Dorsolateral prefrontal cortex (tissue), 120 donors: ENCODE measurements at regions of chr9 and their contacts with region 1.

Region 1: DNA sequence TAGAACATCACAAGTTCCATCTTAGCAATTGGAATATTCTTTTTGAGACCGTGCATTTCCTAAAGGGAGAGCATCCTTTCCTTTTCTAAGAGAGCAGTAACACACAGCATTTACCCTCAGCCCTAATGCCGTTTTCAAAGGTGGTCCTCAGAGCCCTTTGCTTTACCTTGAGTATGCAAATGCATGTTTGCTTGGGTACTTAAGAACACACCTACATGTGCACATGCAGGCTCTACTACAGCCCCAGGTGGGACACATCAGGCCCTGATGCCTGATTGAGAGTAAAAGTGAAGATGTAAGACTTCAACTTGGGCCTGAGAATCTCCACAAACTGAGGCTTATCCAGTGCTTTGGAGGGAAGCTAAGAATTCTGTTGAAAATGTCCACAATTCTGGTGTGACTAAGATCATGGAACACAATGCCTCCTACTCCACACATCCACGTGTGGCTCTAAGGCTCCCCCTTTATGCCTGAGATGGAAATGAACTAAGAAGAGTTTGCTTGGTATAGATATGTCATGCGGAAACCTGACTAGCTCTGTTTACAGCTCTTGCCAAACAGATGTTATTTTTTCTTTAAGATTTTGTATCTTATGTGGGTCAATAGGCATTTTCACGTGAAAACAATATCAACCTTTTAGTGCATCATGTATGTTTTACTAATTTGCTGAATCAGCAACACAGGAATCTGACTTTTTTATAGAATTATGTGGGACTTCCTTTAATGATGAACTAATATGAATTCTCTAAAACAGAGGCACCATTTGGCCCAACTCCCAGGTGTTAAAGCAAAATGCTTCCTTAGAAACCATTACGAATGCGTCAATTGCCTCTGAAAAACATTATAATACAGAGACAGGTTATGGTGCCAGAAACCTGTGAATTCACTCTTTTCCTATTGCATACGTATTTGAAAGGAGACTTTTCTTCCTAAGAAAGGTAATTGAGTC is 48.9 kb upstream of the SLC2A8 start:
- DNase-seq: peak in 1 of 10 donors; percentile 58
- H3K4me3 ChIP-seq: no peak overlapping the region
- H3K27ac ChIP-seq: peak overlapping the region in 8 of 59 donors; percentile 3 to 41 (median 18)
- H3K27me3 ChIP-seq: no peaks in the 10 kb centered on the region
- CTCF ChIP-seq: peak in 47 of 56 donors; percentile 13 to 70 (median 53)

Region 2: DNA sequence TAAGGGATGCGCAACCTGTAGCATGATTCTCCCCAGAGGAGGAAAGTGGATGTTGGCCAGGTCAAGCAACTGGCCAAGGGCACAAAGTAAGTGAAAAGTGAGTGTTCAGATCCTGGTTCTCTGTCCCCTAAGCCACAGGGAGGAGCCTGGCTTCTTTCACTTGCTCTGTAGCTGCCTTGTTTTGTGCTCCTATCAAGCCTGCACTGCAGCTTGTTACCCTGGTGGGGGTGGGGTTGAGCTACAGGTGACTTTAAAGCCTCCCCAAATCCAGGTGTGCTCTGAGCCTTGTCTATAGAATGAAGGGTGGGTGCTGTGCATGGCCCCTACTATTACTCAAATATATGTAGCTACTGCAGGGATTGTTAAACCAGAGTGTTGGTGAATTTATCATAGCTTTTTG is 400.6 kb before region 1 on chr9:
- intact Hi-C with region 1: loop called in 1 of 2 experiments (anchors 10 kb)
- DNase-seq: no peak
- H3K4me3 ChIP-seq: no peak overlapping the region
- H3K27ac ChIP-seq: no peak overlapping the region
- H3K27me3 ChIP-seq: no peaks in the 10 kb centered on the region
- CTCF ChIP-seq: no peak

Region 3: DNA sequence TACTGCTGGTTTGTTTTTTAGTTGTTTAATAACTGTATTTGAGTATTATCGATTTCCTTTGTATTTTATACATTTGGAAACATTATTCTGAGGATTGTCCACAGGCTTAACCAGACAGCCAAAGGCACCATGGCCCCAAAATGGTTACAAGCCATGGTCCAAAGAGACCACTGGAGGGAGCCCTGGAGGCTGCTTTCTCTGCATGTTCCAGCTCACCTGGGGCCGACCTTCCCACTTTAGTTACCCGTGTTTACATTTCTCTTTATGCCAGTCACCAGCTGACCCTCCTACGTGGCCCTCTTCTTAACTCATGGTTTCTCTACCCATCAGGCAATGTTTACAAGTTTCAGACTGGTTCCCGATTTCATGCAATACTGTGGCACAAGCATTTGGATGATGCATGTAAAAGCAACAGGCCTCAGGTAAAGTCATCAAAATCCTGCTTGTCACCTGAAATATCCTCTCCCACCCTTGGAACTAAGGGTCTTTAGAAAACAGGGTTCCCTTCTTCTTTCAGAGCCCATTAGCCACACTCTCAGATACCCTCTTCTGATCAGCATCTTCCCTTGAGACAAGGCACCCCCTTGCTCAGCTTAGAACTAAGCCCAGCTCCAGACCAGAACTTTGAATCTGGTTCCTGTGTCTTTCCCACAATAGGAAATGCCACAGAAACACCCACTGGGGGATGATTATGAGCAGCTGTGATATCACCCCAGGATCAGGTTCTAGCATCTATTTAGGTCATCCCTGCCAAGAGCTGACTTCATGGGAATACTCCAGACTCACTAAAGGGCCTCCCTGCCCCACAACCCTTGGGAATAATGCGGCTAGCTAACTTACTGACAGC is 133.5 kb before region 1 on chr9:
- intact Hi-C with region 1: loop called in 1 of 2 experiments (anchors 5 kb)
- DNase-seq: peak in 7 of 10 donors; percentile 52 to 79 (median 68)
- H3K4me3 ChIP-seq: no peak overlapping the region
- H3K27ac ChIP-seq: peak overlapping the region in 3 of 59 donors; percentile 22 to 33 (median 23)
- H3K27me3 ChIP-seq: no peaks in the 10 kb centered on the region
- CTCF ChIP-seq: peak; percentile 48 to 81 (median 73)

Region 4: GRCh38 chr9:127293328-127293727 is 54.8 kb before region 1 on chr9:
- intact Hi-C with region 1: loop called in 1 of 2 experiments (anchors 10 kb)
- DNase-seq: no peak
- H3K4me3 ChIP-seq: no peak overlapping the region
- H3K27ac ChIP-seq: peak overlapping the region in 11 of 59 donors; percentile 2 to 48 (median 21)
- H3K27me3 ChIP-seq: no peaks in the 10 kb centered on the region
- CTCF ChIP-seq: no peak